Body of pancreas (tissue), 4 donors: ENCODE measurements at regions of chr15 and their contacts with region 1.

Region 1: GRCh38 chr15:69394556-69395282 is 19.4 kb upstream of the KIF23 start:
- DNase-seq: peak; percentile 71 to 81 (median 76)
- ATAC-seq: peak; percentile 77
- H3K4me3 ChIP-seq: no peak overlapping the region
- H3K27ac ChIP-seq: no peak overlapping the region
- H3K4me1 ChIP-seq: peaks cover 25% of the 10 kb centered on the region
- H3K27me3 ChIP-seq: no peaks in the 10 kb centered on the region
- CTCF ChIP-seq: peak; percentile 81 to 98 (median 91)
- POLR2A ChIP-seq: no peak

Region 2: GRCh38 chr15:69058830-69059556 is 335.7 kb before region 1 on chr15:
- intact Hi-C with region 1: loop called (anchors 5 kb)
- DNase-seq: peak; percentile 87 to 91 (median 89)
- ATAC-seq: peak; percentile 81
- H3K4me3 ChIP-seq: no peak overlapping the region
- H3K27ac ChIP-seq: no peak overlapping the region
- H3K4me1 ChIP-seq: peaks cover 7% of the 10 kb centered on the region
- H3K27me3 ChIP-seq: no peaks in the 10 kb centered on the region
- CTCF ChIP-seq: peak; percentile 57 to 93 (median 90)
- POLR2A ChIP-seq: no peak

Region 3: GRCh38 chr15:69160141-69160993 is 234.4 kb before region 1 on chr15 and contains the start of gene GLCE:
- intact Hi-C with region 1: loop called (anchors 10 kb)
- DNase-seq: peak; percentile 97 to 98 (median 98)
- ATAC-seq: peak; percentile 96
- H3K4me3 ChIP-seq: peak within 1 kb of the TSS; percentile 59 to 97
- H3K27ac ChIP-seq: peak within 1 kb of the TSS; percentile 60 to 94 (median 84)
- H3K4me1 ChIP-seq: peaks cover 12% of the 10 kb centered on the region
- H3K27me3 ChIP-seq: no peaks in the 10 kb centered on the region
- CTCF ChIP-seq: peak in 2 of 7 experiments; percentile 7 to 16
- POLR2A ChIP-seq: peak; percentile 92 to 98 (median 97)
- total RNA-seq, gene GLCE: 6.6 to 9.3 TPM